H1 (cell line): ENCODE measurements at regions of chr19 and their contacts with region 1.

Region 1: DNA sequence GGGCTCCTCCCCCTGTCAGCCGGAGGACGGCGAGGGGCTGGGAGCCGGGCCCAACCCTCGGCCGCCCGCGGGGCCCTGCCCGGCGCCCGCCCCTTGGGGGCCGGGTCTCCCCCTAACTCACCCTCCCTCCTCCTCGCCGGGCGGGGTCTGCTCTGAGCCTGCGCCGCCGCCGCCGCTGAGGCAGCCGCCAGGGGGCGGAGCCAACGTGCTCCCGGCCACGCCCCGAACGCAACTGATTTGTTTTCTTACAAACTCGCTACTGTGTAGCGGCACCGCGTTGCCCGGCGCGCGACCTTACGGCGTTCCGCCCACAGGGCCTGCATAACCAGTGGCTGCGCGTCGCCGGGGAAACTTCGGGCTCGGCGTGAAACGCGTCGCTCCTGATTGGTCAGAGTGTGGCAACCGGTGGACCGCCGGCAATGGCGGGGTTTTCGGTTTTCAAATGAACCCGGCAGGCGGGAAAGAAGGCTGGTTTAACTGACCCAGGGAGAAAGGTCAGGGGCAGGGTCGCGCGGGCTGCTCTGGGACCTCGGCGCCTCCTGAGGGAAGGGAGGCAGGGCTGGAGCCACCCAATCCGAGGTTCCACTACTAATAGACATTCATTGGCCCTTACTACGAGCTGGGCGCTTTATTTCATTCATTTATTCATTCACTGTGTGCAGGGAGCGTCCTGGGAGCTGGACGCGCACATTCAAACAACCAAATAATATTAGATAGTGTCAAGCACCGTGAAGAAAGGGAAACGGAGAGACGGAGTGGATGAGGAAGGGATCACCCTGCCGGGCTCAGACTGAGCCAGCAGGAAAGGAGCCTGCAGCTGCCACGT is at the start of gene CDKN2D:
- DNase-seq: peak; percentile 99
- H3K4me3 ChIP-seq: peak within 1 kb of the TSS; percentile 58 to 71 (median 70)
- H3K27ac ChIP-seq: peak within 1 kb of the TSS; percentile 79
- H3K4me1 ChIP-seq: peaks cover 0 to 19% (median 9%) of the 10 kb centered on the region in 4 experiments; a peak in 6 of 7 replicates
- H3K27me3 ChIP-seq: peaks cover 0 to 10% (median 7%) of the 10 kb centered on the region in 4 experiments; a peak in 4 of 7 replicates
- CTCF ChIP-seq: no peak
- EP300 ChIP-seq: no peak
- POLR2A ChIP-seq: peak; percentile 64 to 65
- RAD21 ChIP-seq: no peak
- total RNA-seq, gene CDKN2D: 2.6 and 3.0 TPM in 2 replicates

Region 2: GRCh38 chr19:10593820-10594637 is 25.0 kb after region 1 on chr19:
- CTCF ChIA-PET with region 1: interaction called, 10 read pairs
- POLR2A ChIA-PET with region 1: interaction called, 3 read pairs
- DNase-seq: no peak
- H3K4me3 ChIP-seq: no peak overlapping the region
- H3K27ac ChIP-seq: no peak overlapping the region
- H3K4me1 ChIP-seq: no peaks in the 10 kb centered on the region
- H3K27me3 ChIP-seq: no peaks in the 10 kb centered on the region
- CTCF ChIP-seq: no peak
- EP300 ChIP-seq: no peak
- POLR2A ChIP-seq: no peak
- RAD21 ChIP-seq: no peak